OCI-LY7 (cell line): ENCODE measurements at regions of chr15 and their contacts with region 1.

Region 1: DNA sequence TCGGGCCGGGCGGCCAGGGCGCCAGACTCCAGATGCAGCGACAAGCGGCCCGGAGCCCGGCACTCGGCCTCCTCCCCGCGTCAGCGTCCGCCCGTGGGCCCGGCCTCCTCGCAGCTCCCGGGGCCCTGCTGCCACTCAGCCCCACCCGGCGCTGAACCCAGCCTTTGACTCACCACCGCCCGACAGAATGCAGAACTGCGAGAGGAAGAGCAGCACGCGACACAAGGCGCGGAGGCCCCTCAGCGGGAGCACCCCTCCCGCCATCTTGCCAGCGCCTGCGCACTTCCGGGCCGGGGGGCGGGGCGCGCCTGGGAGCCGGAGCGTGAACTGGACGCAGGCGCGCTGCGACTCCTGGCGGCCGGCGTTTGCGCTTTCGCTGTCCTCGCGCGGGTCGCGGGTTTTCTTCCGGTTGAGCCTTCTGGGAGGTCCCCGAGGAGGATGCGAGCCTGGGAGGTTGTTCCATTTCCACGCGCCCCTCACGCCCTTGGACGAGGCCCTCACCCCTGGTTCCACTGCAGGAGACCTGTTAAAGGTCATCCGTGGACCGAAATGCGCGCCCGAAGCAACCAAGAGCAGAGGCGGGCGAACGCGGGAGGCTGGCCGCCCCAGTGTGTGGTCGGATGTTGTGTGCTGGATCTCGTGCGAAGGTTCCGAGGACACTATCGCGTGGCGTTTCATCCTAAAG is at the start of gene TM2D3:
- DNase-seq: peak; percentile 94
- H3K4me3 ChIP-seq: peak within 1 kb of the TSS; percentile 82
- H3K27ac ChIP-seq: peak within 1 kb of the TSS; percentile 84
- H3K4me1 ChIP-seq: peaks cover 32% of the 10 kb centered on the region
- CTCF ChIP-seq: peak; percentile 63
- total RNA-seq, gene TM2D3: 28.2 and 39.0 TPM in 2 replicates

Region 2: GRCh38 chr15:100929641-100930042 is 722.6 kb before region 1 on chr15:
- CTCF ChIA-PET with region 1: no interaction called
- POLR2A ChIA-PET with region 1: interaction called, 3 read pairs
- intact Hi-C with region 1: loop called (anchors 5 kb)
- DNase-seq: peak; percentile 92
- H3K4me3 ChIP-seq: peak overlapping the region; percentile 53
- H3K27ac ChIP-seq: peak overlapping the region; percentile 99
- H3K4me1 ChIP-seq: peaks cover 99% of the 10 kb centered on the region
- CTCF ChIP-seq: no peak

Region 3: DNA sequence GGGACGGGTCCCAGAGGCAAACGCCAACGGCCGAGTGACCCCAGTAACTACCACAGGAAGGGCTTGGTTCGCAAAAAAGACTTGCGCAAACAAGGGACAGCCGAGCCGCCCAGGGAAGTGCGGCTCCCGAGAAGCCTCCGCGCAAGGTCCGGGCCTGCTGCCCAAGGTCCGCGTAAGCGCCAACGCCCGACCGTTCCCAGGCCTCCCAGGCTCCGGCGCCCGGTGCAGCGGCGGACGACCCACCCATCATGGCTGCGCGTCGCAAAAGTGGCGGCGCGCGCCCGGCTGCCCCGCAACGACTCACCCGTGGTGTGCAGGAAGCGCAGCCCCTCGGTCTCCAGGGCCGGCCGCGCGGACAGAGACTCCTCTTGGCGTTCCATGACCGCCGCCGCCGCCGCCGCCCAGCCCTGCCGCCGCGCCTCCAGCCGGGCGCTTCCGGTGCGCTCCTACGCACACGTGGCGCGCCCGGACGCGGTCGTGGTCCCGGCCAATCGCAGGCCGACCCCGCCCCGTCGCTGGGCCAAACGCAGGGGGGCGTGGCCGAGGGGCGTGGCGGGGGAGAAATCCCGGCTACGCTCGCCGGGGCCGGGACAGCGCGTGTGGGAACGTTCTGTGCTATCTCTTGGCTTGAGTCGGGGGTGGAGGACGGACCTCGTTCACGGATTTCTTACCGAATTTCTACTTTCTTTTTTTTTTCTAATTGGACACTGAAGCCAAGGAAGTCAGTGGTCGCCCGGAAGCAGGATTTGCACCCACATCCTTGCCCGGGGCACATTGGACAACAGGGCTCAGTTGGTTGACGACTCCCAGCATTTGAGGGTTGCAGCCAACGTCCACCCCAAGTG is 375.0 kb before region 1 on chr15 and contains the start of gene SELENOS:
- CTCF ChIA-PET with region 1: interaction called, 5 read pairs
- POLR2A ChIA-PET with region 1: interaction called, 3 read pairs
- intact Hi-C with region 1: loop called (anchors 1 kb)
- DNase-seq: peak; percentile 92
- H3K4me3 ChIP-seq: peak within 1 kb of the TSS; percentile 98
- H3K27ac ChIP-seq: peak within 1 kb of the TSS; percentile 38
- H3K4me1 ChIP-seq: peaks cover 14% of the 10 kb centered on the region
- CTCF ChIP-seq: no peak
- total RNA-seq, gene SELENOS: 29.1 and 31.1 TPM in 2 replicates

Region 4: GRCh38 chr15:101294731-101295606 is 357.3 kb before region 1 on chr15 and contains the start of gene SNRPA1:
- CTCF ChIA-PET with region 1: interaction called, 5 read pairs
- POLR2A ChIA-PET with region 1: interaction called, 5 read pairs
- intact Hi-C with region 1: loop called (anchors 1 kb)
- DNase-seq: peak; percentile 96
- H3K4me3 ChIP-seq: peak within 1 kb of the TSS; percentile 90
- H3K27ac ChIP-seq: peak within 1 kb of the TSS; percentile 84
- H3K4me1 ChIP-seq: peaks cover 27% of the 10 kb centered on the region
- CTCF ChIP-seq: no peak
- total RNA-seq, gene SNRPA1: 54.3 and 70.9 TPM in 2 replicates

Region 5: DNA sequence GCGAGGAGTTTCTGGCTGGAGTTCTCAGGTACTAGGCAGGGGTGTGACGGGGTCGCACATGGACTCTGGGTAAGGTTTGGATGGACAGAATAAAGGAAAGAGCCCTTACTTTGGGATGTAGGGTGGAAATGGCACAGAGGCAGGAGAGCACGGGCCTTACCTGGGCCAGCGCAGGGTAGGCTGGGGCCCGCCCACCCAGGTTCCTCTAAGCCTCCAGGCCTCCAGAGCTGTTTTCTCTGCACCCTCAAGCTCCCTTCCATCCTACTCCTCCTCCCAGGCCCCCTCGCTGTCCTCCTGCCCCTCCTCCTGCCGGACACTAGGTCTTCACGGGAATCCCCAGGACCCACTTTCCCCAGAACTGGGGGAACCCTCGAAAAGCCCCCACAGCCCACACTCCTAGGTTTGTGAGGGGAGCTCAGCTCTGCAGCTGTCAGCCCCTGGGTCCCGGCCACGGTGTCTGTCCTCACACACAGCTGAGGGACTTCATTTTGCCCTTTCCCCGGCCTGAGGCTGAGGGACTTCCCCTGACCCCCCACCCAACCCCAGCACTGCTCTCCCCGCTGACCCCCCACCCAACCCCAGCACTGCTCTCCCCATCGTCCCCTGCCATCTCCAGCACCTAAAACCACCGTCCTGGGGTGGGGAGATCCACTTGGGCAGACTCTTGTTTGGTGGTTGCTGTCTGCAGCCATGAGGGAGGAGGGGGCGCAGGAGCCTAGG is 109.8 kb before region 1 on chr15:
- CTCF ChIA-PET with region 1: no interaction called
- POLR2A ChIA-PET with region 1: no interaction called
- intact Hi-C with region 1: no loop called
- DNase-seq: peak; percentile 3
- H3K4me3 ChIP-seq: no peak overlapping the region
- H3K27ac ChIP-seq: no peak overlapping the region
- H3K4me1 ChIP-seq: no peaks in the 10 kb centered on the region
- CTCF ChIP-seq: no peak

Region 6: DNA sequence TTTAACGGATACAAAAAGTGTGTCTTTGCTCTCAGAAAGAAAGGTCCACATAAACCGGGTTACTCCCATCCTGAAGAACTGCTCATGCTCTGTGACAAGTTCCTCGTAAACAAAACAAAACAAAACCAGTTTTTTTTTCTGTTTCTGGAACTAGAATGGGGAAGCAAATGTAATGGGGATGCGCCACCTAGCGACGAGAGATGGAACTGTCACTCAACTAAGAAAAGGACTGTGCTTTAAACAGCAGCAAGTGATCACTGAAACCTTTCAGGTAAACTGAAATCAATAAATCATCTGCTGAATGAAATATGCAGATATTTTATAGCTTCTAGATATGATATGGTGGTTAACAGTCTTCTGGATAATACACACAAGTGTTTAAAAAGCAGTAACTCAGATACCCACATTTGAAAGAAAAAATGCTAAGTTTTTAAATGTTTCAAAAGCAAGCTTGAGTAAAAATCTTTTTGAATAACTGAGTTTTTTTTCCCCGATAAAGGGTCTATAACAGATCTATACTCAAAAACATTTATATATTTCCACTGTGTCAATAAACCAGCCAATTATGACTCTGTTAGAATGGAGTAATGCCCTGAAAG is 11.0 kb before region 1 on chr15:
- CTCF ChIA-PET with region 1: interaction called, 10 read pairs
- POLR2A ChIA-PET with region 1: interaction called, 3 read pairs
- intact Hi-C with region 1: no loop called
- DNase-seq: peak; percentile 63
- H3K4me3 ChIP-seq: no peak overlapping the region
- H3K27ac ChIP-seq: peak overlapping the region; percentile 46
- H3K4me1 ChIP-seq: peaks cover 19% of the 10 kb centered on the region
- CTCF ChIP-seq: peak; percentile 99

Region 7: GRCh38 chr15:101694261-101694660 is 42.0 kb after region 1 on chr15:
- CTCF ChIA-PET with region 1: no interaction called
- POLR2A ChIA-PET with region 1: no interaction called
- intact Hi-C with region 1: no loop called
- DNase-seq: no peak
- H3K4me3 ChIP-seq: no peak overlapping the region
- H3K27ac ChIP-seq: no peak overlapping the region
- H3K4me1 ChIP-seq: no peaks in the 10 kb centered on the region
- CTCF ChIP-seq: 0 out of 2 replicates have a peak, but pooled peaks have one; percentile 12

Region 8: DNA sequence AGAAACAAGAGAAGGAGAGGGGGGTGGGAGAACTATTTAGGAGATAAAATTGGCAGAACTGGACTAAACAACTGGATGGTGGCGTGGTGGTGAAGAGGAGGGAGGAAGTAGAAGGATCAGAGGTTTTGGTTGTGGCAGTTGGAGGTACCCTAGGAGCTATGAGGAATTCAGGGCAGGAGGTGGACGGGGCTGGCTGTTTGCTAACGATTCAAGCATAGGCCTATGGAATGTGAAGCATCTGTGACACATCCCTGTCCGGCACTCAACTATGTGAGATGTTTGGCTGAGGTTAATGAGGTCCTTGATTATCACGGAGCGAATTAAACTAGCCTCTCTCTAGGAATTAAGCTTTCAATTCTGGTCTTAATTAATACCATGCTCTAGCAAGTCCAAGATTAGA is 58.6 kb after region 1 on chr15:
- CTCF ChIA-PET with region 1: no interaction called
- POLR2A ChIA-PET with region 1: no interaction called
- intact Hi-C with region 1: no loop called
- DNase-seq: no peak
- H3K4me3 ChIP-seq: no peak overlapping the region
- H3K27ac ChIP-seq: no peak overlapping the region
- H3K4me1 ChIP-seq: no peaks in the 10 kb centered on the region
- CTCF ChIP-seq: no peak

Region 9: GRCh38 chr15:101723874-101724674 is 71.8 kb after region 1 on chr15 and contains the start of gene TARS3:
- CTCF ChIA-PET with region 1: interaction called, 3 read pairs
- POLR2A ChIA-PET with region 1: interaction called, 3 read pairs
- intact Hi-C with region 1: loop called (anchors 5 kb)
- DNase-seq: peak; percentile 91
- H3K4me3 ChIP-seq: peak within 1 kb of the TSS; percentile 72
- H3K27ac ChIP-seq: peak within 1 kb of the TSS; percentile 60
- H3K4me1 ChIP-seq: peaks cover 16% of the 10 kb centered on the region
- CTCF ChIP-seq: peak; percentile 43; the same call in 1 of the 2 replicates
- total RNA-seq, gene TARS3: 7.1 and 9.2 TPM in 2 replicates